ENCODE measurements at regions of chr3 and their contacts with region 1.

Region 1: DNA sequence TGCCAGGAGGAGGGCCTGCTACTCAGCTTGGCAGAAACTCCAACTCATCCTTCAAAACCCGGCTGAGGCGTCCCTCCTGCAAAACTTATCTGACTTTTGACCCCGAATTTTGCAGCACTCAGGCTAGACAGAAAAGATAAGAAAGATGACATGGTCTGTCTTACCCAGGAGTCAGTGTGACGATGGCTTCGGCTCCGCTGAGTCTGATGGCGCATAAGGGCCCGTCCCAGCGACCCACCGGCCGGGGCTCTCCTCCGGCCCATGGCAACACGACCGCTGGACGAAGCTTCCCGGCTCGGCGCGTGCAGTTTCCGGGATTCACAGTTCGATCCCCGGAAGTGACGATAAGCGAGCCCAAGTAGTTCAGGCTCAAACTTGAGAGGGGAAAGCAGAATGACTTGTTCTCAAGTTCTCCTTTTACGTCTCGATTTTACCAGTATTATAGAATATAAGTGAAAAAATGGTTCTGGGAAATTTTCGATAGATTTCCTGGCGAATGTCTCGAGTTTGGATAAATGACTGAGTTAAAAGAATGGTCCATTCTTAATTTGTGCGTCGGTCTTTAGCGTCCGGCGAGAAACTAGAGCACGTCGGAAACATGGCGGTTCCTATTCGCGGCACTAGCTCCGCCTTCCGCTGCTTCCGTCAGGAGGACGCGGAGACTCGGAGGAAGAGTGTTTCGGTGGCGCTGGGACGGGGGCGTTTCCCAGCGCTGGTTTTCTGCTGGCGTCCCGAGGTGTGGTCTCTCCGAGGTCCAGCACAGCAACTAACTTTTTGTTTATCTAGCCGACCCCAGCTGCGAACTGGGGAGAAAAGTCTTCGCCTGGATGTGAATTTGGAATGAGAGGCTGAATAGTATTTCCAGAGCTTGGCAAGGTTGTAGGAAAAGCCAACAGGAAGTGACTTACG is at the start of gene LSG1:
- DNase-seq: peak; percentile 91
- H3K4me3 Mint-ChIP-seq: peak within 1 kb of the TSS; percentile 96
- H3K27ac Mint-ChIP-seq: peak within 1 kb of the TSS; percentile 93
- H3K4me1 Mint-ChIP-seq: peaks cover 55% of the 10 kb centered on the region
- H3K27me3 Mint-ChIP-seq: peaks cover 3% of the 10 kb centered on the region
- total RNA-seq, gene LSG1: 24.7 to 26.5 TPM

Region 2: GRCh38 chr3:194583604-194584318 is 88.4 kb before region 1 on chr3:
- CTCF ChIA-PET with region 1: no interaction called
- POLR2A ChIA-PET with region 1: interaction called, 11 read pairs
- DNase-seq: peak; percentile 95
- H3K4me3 Mint-ChIP-seq: peak overlapping the region; percentile 97
- H3K27ac Mint-ChIP-seq: peak overlapping the region; percentile 93
- H3K4me1 Mint-ChIP-seq: peaks cover 31% of the 10 kb centered on the region
- H3K27me3 Mint-ChIP-seq: no peaks in the 10 kb centered on the region

Region 3: GRCh38 chr3:194642769-194643168 is 29.4 kb before region 1 on chr3:
- CTCF ChIA-PET with region 1: interaction called, 14 read pairs
- POLR2A ChIA-PET with region 1: interaction called, 3 read pairs
- DNase-seq: no peak
- H3K4me3 Mint-ChIP-seq: no peak overlapping the region
- H3K27ac Mint-ChIP-seq: no peak overlapping the region
- H3K4me1 Mint-ChIP-seq: peaks cover 2% of the 10 kb centered on the region
- H3K27me3 Mint-ChIP-seq: no peaks in the 10 kb centered on the region

Region 4: GRCh38 chr3:194661374-194661773 is 10.8 kb before region 1 on chr3:
- CTCF ChIA-PET with region 1: interaction called, 18 read pairs
- POLR2A ChIA-PET with region 1: interaction called, 18 read pairs
- DNase-seq: no peak
- H3K4me3 Mint-ChIP-seq: no peak overlapping the region
- H3K27ac Mint-ChIP-seq: no peak overlapping the region
- H3K4me1 Mint-ChIP-seq: peaks cover 18% of the 10 kb centered on the region
- H3K27me3 Mint-ChIP-seq: no peaks in the 10 kb centered on the region

Region 5: GRCh38 chr3:194682694-194683310 is 10.6 kb after region 1 on chr3:
- CTCF ChIA-PET with region 1: interaction called, 232 read pairs
- POLR2A ChIA-PET with region 1: interaction called, 71 read pairs
- DNase-seq: peak; percentile 71
- H3K4me3 Mint-ChIP-seq: no peak overlapping the region
- H3K27ac Mint-ChIP-seq: no peak overlapping the region
- H3K4me1 Mint-ChIP-seq: peaks cover 45% of the 10 kb centered on the region
- H3K27me3 Mint-ChIP-seq: peaks cover 38% of the 10 kb centered on the region

Region 6: GRCh38 chr3:195106418-195106906 is 434.3 kb after region 1 on chr3:
- CTCF ChIA-PET with region 1: interaction called, 13 read pairs
- POLR2A ChIA-PET with region 1: no interaction called
- DNase-seq: peak; percentile 62
- H3K4me3 Mint-ChIP-seq: no peak overlapping the region
- H3K27ac Mint-ChIP-seq: no peak overlapping the region
- H3K4me1 Mint-ChIP-seq: peaks cover 10% of the 10 kb centered on the region
- H3K27me3 Mint-ChIP-seq: no peaks in the 10 kb centered on the region

Region 7: DNA sequence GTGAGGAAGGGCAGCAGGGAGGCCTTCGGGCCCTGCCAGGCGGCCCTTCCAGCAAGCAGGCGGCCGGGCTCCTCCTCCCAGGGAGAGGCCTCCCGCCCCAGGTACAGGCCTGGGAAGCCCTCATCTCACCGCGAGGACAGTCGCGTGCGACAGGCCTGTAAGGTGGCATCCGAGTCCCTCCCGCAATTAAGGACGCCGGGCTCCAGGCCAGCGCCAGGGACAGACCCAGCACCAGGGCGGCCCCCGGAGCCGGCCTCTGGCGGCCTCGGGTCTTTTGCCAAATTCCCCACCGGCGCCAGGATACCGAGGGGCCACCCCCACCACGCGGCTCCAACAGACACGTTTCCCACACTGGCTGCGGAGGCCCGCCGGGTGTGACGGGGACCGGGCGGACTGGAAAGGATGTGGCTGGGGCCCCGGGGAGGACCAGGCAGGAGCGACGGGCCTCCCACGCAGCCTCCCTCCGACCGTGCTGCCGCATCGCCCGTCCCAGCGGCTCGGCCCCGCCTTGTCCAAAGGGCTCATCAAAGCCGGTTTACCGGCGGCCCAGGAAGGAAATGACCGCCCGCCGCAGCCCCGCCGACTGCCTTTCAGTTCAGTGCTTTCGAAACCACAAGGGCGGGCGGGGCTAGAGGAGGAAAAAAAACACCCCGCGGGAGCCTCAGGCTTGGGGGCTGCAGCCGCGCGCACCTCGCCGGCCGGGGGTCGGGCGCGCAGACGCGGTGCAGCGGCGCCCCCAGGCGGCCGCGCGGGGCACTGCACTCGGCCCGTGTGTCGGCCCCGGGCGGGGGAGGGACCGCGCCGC is 587.5 kb after region 1 on chr3:
- CTCF ChIA-PET with region 1: interaction called, 15 read pairs
- POLR2A ChIA-PET with region 1: interaction called, 4 read pairs
- DNase-seq: peak; percentile 84
- H3K4me3 Mint-ChIP-seq: peak overlapping the region; percentile 48
- H3K27ac Mint-ChIP-seq: no peak overlapping the region
- H3K4me1 Mint-ChIP-seq: peaks cover 24% of the 10 kb centered on the region
- H3K27me3 Mint-ChIP-seq: no peaks in the 10 kb centered on the region

Measured in activated CD4-positive, alpha-beta memory T cell treated with anti-CD3 and anti-CD28 coated beads, Interleukin-2, amount 10 ng/mL, durations not matched to agents 7 days and 5 days (primary cell).